Dorsolateral prefrontal cortex (tissue), 120 donors: ENCODE measurements at regions of chr2 and their contacts with region 1.

Region 1: DNA sequence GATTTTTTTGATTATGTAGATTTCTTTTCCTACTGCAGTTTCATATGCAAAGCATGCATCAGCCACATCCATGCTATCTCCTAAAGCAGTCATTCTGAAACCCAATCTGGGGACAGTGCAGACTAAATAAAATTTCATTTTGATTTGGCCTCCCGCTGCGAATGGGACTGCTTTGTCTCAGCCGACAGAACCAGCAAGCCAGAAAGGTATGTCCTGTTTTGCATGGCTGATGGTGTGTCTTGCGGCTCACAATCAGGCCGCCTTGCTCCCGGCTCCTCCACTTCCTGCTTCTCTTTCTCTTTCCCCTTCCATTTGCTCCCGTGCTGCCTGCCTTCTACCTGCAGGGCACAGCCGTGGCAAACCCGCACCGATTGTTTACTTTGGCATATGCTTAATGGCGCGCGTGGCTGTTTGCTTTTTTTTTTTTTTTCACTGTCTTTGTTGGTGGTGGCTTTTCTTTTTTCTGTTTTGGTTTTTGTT is 419.6 kb upstream of the POU3F3 start:
- DNase-seq: peak in 5 of 10 donors; percentile 42 to 59 (median 48)
- H3K4me3 ChIP-seq: peak overlapping the region; percentile 32 to 71 (median 56)
- H3K27ac ChIP-seq: peak overlapping the region; percentile 29 to 97 (median 91)
- H3K27me3 ChIP-seq: no peaks in the 10 kb centered on the region
- CTCF ChIP-seq: peak in 6 of 56 donors; percentile 11 to 22 (median 14)

Region 2: DNA sequence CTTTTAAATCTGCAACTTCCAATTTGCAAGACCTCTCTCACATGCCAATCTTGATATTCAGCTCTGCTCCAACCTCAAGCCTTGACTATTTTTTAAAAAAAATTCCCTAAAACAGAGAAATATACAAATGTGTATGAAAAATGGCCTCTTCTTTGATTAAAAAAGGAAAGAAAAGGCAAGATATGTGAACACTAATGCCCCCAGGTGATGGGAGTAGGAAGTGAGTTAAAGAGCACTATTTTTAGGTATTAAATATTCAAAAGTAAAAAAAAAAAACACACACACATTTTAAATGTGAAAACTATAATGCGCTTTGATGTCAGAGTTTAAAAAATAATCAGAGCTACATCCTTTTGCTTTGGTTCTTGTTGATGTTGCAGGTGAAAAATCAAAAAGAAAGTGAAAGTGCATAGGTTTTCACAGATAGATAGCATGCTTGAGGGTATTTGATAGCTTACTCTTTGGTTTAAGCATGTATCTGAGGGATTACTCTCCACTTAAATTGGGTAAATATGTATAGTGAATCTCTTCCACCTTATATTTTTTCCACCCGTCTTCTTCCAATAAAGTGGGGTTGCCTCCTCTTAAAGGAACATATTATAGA is 13.6 kb after region 1 on chr2:
- intact Hi-C with region 1: loop called in 1 of 2 experiments (anchors 2 kb)
- DNase-seq: no peak
- H3K4me3 ChIP-seq: peak overlapping the region; percentile 7 to 69 (median 50)
- H3K27ac ChIP-seq: peak overlapping the region; percentile 39 to 98 (median 90)
- H3K27me3 ChIP-seq: no peaks in the 10 kb centered on the region
- CTCF ChIP-seq: peak; percentile 21 to 75 (median 59)

Region 3: GRCh38 chr2:104493698-104494097 is 59.3 kb after region 1 on chr2:
- intact Hi-C with region 1: no loop called
- DNase-seq: no peak
- H3K4me3 ChIP-seq: no peak overlapping the region
- H3K27ac ChIP-seq: no peak overlapping the region
- H3K27me3 ChIP-seq: no peaks in the 10 kb centered on the region
- CTCF ChIP-seq: no peak

Region 4: DNA sequence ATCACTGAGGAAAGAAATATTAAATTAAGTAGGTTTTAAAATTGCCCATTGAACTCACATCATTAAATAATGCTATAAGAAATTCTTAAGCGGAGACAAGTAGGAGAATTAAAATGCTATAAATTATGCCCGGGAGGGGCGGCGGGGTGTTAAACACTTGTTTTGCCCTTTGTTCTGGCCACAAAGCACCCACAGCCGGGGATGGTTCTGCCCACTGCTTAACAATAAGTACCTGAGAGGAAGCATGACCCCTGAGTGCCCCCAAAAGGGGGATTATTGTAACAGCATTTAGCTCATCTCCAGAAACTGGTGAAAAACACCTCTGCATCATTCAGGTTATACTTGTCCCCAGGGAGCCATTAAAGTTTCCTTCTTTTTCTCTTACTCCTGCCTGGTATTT is 86.9 kb after region 1 on chr2:
- intact Hi-C with region 1: no loop called
- DNase-seq: no peak
- H3K4me3 ChIP-seq: no peak overlapping the region
- H3K27ac ChIP-seq: no peak overlapping the region
- H3K27me3 ChIP-seq: no peaks in the 10 kb centered on the region
- CTCF ChIP-seq: peak in 7 of 56 donors; percentile 9 to 31 (median 11)